HCT116 (cell line): ENCODE measurements at regions of chr11 and their contacts with region 1.

Region 1: DNA sequence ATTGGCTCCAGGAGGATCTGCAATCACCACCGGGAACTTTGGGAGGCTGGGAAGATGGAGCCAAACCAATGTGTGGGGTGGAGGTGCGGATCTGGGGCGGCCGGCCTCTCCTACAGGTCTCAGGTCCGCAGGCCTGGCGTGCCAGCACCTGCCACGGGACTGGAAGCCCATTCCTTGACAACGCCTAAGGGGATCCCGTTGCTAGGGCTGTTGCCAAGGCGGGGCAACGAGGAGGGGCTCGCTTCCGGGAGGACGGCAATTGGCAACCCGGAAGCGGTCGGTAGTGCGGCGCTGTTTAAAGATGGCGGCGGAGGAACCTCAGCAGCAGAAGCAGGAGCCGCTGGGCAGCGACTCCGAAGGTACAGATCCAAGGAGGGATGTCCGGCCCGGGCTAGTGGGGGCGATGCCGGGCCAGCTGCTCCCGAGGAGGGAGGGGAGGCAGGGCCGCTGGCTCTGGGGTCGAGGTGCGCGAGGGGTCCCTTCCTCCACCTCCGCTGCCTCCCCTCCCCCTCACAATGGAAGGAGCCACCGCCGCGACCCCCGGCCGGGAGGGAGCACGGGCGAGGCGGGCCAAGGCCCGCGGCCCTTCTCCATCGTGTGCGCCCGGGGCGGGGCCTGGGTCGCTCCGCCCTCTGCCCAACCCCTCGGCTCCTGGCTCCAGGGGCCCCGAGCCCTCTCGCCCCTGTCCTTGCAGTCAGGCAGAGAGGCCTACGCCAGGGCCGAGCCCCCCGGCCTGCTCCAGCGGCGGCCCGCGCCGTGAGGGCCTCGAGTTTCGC is at the start of gene OTUB1:
- DNase-seq: peak; percentile 78
- ATAC-seq: peak; percentile 90
- H3K4me3 ChIP-seq: peak within 1 kb of the TSS; percentile 76 to 86
- H3K27ac ChIP-seq: peak within 1 kb of the TSS; percentile 86
- H3K4me1 ChIP-seq: peaks cover 7 to 24% of the 10 kb centered on the region in 2 experiments
- H3K27me3 ChIP-seq: no peaks in the 10 kb centered on the region
- CTCF ChIP-seq: no peak
- POLR2A ChIP-seq: peak; percentile 80
- RAD21 ChIP-seq: no peak
- total RNA-seq, gene OTUB1: 87.0 TPM

Region 2: GRCh38 chr11:63938479-63939396 is 47.6 kb before region 1 on chr11 and contains the start of gene NAA40:
- CTCF ChIA-PET with region 1: no interaction called
- POLR2A ChIA-PET with region 1: no interaction called
- RAD21 ChIA-PET with region 1: no interaction called
- intact Hi-C with region 1: loop called (anchors 1 kb)
- DNase-seq: peak; percentile 96
- ATAC-seq: peak; percentile 95
- H3K4me3 ChIP-seq: peak within 1 kb of the TSS; percentile 92 to 97
- H3K27ac ChIP-seq: peak within 1 kb of the TSS; percentile 87
- H3K4me1 ChIP-seq: peaks cover 10 to 31% of the 10 kb centered on the region in 2 experiments
- H3K27me3 ChIP-seq: no peaks in the 10 kb centered on the region
- CTCF ChIP-seq: no peak
- POLR2A ChIP-seq: peak; percentile 38
- RAD21 ChIP-seq: no peak
- total RNA-seq, gene NAA40: 25.3 TPM

Region 3: DNA sequence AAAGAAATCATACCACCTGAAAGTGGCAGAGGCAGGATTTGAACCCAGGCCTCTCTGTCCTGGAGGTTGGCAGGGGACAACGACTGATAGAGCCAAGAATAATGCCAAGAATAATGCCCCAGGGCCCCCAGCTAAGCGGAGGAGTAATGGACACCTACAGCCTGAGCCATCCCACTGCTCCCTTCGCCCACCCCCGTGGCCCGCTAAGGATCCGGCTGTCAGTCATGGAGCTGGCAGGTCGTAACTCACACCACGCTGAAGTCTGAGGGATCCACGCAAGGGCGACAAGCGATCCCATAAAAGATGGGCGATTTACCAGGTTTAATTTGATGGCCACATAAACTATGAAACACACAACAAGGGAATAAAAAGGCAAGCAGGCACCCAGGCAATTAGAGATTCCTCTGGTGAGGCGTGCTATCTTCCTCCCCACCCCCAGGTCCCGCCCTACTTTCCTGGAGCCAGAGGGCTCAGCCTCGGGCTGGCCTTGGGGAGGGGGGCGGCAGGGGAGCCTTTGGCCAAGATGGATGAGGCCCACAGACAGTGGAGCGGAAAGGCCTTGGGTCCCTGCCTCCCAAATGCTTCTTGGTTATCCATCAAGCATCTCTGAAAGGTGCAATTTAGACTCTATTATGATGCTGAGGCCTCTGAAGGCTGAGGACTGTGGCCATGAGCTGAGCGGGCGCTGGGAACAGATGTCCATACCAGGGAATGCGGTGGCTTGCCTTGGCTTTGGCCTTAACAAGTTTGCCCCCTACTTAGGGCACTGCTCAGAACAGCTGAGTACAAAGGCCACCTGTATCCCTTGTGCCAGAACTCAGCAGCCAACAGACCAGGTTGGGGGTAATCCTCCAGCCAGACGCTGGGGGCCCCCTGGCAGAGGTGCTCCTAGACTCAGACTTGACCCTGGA is 124.4 kb after region 1 on chr11:
- CTCF ChIA-PET with region 1: no interaction called
- POLR2A ChIA-PET with region 1: no interaction called
- RAD21 ChIA-PET with region 1: no interaction called
- intact Hi-C with region 1: no loop called
- DNase-seq: no peak
- ATAC-seq: no peak
- H3K4me3 ChIP-seq: no peak overlapping the region
- H3K27ac ChIP-seq: no peak overlapping the region
- H3K4me1 ChIP-seq: no peaks in the 10 kb centered on the region
- H3K27me3 ChIP-seq: no peaks in the 10 kb centered on the region
- CTCF ChIP-seq: no peak
- POLR2A ChIP-seq: no peak
- RAD21 ChIP-seq: no peak